Left ventricle myocardium inferior (tissue), 1 donor: ENCODE measurements at regions of chr15 and their contacts with region 1.

Region 1: DNA sequence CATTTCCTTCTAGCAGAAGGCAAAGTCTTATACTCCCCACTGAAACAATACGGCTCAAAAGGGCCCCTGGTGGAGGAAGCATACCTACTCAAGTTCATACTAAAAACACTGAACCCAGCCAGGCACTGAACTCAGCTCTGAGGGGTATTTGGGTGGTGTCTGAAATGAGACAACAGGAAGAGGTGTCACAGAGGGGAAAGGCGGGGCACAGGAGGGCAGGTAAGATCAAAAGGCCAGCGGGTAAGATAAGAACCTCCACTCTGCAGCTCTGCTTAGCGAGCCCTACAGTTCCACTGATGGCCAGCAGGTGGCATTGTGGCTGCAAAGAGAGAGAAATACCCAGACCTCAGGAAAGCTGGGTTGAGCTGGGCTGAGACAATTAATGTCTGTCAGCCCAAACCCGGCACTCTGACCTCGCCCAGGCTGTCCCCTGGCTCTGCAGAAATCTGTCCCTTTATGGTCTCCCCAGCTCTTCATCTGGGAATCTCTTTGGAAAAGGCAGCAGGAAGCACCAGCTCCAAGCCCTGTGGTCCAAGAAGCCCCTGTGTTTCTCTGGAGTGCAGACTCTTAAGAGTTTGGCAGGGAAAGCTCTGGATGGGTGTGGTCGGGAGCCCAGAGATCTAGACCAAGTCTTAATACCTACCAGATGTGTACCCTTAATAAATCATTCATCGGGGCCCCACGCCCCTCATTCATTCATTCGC is 8.4 kb downstream of the MFGE8 start:
- DNase-seq: peak; percentile 85
- H3K4me3 ChIP-seq: no peak overlapping the region
- H3K27ac ChIP-seq: peak overlapping the region; percentile 95
- H3K4me1 ChIP-seq: peaks cover 93% of the 10 kb centered on the region
- H3K27me3 ChIP-seq: no peaks in the 10 kb centered on the region
- CTCF ChIP-seq: peak; percentile 100

Region 2: GRCh38 chr15:89003865-89004725 is 99.3 kb after region 1 on chr15:
- intact Hi-C with region 1: loop called (anchors 5 kb)
- DNase-seq: peak; percentile 48
- H3K4me3 ChIP-seq: no peak overlapping the region
- H3K27ac ChIP-seq: no peak overlapping the region
- H3K4me1 ChIP-seq: peaks cover 34% of the 10 kb centered on the region
- H3K27me3 ChIP-seq: no peaks in the 10 kb centered on the region
- CTCF ChIP-seq: peak; percentile 77

Region 3: GRCh38 chr15:89017370-89018066 is 112.7 kb after region 1 on chr15:
- intact Hi-C with region 1: loop called (anchors 5 kb)
- DNase-seq: peak; percentile 78
- H3K4me3 ChIP-seq: peak overlapping the region; percentile 56
- H3K27ac ChIP-seq: peak overlapping the region; percentile 87
- H3K4me1 ChIP-seq: peaks cover 41% of the 10 kb centered on the region
- H3K27me3 ChIP-seq: no peaks in the 10 kb centered on the region
- CTCF ChIP-seq: peak; percentile 85

Region 4: GRCh38 chr15:89177633-89178306 is 273.0 kb after region 1 on chr15:
- intact Hi-C with region 1: loop called (anchors 10 kb)
- DNase-seq: peak; percentile 47
- H3K4me3 ChIP-seq: no peak overlapping the region
- H3K27ac ChIP-seq: peak overlapping the region; percentile 45
- H3K4me1 ChIP-seq: peaks cover 50% of the 10 kb centered on the region
- H3K27me3 ChIP-seq: no peaks in the 10 kb centered on the region
- CTCF ChIP-seq: peak; percentile 85